Right lobe of liver (tissue), 6 donors: ENCODE measurements at regions of chr17 and their contacts with region 1.

Region 1: DNA sequence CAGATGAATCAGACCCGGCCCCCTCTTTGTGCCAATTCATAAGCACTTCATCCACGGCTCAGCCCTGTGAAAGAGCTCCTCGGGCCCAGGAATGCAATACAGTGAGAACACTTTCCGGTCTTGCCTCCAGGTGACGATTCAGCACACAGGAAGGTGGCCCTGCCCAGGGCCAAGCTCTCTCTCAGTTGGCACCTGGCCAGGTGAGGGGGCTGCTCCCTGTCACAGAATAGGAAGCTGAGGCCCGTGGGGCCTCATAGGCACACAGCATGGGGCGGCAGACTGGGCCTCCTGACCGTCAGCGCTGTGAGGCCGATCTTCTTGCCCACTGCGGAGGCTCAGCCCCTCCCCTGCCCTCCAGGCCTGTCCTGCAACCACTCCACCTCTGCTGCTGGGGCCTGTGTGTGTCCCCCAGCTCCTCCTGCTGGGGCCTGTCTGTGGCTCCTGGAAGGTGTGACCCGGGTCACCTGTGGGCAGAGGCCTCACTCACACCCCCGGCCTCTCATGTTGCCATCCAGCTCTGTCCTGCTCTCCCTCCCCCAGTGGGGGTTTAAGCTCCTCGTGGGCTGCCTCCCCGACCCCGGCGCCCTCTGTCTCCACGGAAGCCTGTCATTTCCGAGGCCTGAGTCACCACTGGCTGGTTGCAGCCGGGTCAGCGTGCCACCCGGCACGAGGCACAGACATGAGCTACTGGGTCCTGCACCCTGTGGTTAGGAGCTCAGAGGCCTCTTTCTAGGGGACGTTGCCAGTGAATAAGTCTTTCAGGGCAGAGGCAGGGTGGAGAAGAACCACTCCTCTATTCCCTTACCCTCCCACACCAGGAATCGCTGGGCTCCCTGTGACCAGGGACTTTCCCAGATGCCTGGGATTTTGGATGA is 114.4 kb downstream of the SEC14L1 start:
- DNase-seq: no peak
- ATAC-seq: peak in 3 of 4 donors; percentile 12 to 36 (median 21)
- H3K4me3 ChIP-seq: no peak overlapping the region
- H3K27ac ChIP-seq: no peak overlapping the region
- H3K4me1 ChIP-seq: no peaks in the 10 kb centered on the region
- H3K27me3 ChIP-seq: no peaks in the 10 kb centered on the region
- CTCF ChIP-seq: no peak
- POLR2A ChIP-seq: no peak

Region 2: DNA sequence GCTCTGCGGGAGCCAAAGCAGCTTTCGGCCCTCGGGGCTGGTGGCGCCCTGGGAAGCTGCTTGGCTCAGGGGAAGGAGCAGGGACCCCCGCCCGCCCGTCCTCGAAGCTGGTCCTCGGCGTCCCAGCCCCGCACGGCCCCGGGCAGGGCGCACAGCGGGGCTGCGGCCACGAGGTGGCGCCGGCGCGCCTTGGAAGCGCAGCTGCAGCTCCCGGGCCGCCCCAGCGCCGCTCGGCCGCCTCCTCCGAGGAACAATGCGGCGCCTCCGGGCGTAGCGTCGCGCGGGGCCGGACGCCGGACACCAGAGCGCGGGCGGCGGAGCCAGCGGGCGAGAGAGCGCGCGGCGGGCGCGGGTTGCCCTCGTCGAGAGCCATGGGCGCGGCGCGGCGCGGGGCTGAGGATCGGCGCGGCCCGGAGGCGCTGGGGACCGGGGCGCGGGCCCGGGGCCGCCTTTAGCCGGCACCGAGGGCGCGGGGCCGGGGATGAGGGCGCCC is 387.0 kb before region 1 on chr17 and contains the start of gene MGAT5B:
- intact Hi-C with region 1: loop called in 1 of 2 experiments (anchors 10 kb)
- DNase-seq: peak; percentile 69 to 85 (median 80)
- ATAC-seq: peak; percentile 91 to 98 (median 94)
- H3K4me3 ChIP-seq: peak within 1 kb of the TSS in 1 of 3 donors; percentile 29
- H3K27ac ChIP-seq: no peak within 1 kb of the TSS
- H3K4me1 ChIP-seq: no peaks in the 10 kb centered on the region
- H3K27me3 ChIP-seq: peaks cover 0 to 17% of the 10 kb centered on the region in 2 donors
- CTCF ChIP-seq: peak; percentile 76 to 98 (median 82)
- POLR2A ChIP-seq: no peak
- total RNA-seq, gene MGAT5B: 0.16 TPM in 1 of 6 experiments, not detected in the others

Region 3: GRCh38 chr17:77061669-77062068 is 193.5 kb before region 1 on chr17:
- intact Hi-C with region 1: no loop called
- DNase-seq: no peak
- ATAC-seq: peak in 1 of 4 donors; percentile 18
- H3K4me3 ChIP-seq: no peak overlapping the region
- H3K27ac ChIP-seq: no peak overlapping the region
- H3K4me1 ChIP-seq: no peaks in the 10 kb centered on the region
- H3K27me3 ChIP-seq: no peaks in the 10 kb centered on the region
- CTCF ChIP-seq: no peak
- POLR2A ChIP-seq: no peak

Region 4: GRCh38 chr17:77076124-77076872 is 178.9 kb before region 1 on chr17:
- intact Hi-C with region 1: loop called in 1 of 2 experiments (anchors 5 kb)
- DNase-seq: no peak
- ATAC-seq: no peak
- H3K4me3 ChIP-seq: no peak overlapping the region
- H3K27ac ChIP-seq: no peak overlapping the region
- H3K4me1 ChIP-seq: no peaks in the 10 kb centered on the region
- H3K27me3 ChIP-seq: no peaks in the 10 kb centered on the region
- CTCF ChIP-seq: no peak
- POLR2A ChIP-seq: no peak

Region 5: GRCh38 chr17:77186141-77186604 is 69.0 kb before region 1 on chr17:
- intact Hi-C with region 1: no loop called
- DNase-seq: no peak
- ATAC-seq: peak in 2 of 4 donors; percentile 12 to 40
- H3K4me3 ChIP-seq: no peak overlapping the region
- H3K27ac ChIP-seq: no peak overlapping the region
- H3K4me1 ChIP-seq: no peaks in the 10 kb centered on the region
- H3K27me3 ChIP-seq: no peaks in the 10 kb centered on the region
- CTCF ChIP-seq: no peak
- POLR2A ChIP-seq: no peak

Region 6: GRCh38 chr17:77297693-77298666 is 42.8 kb after region 1 on chr17:
- intact Hi-C with region 1: no loop called
- DNase-seq: no peak
- ATAC-seq: no peak
- H3K4me3 ChIP-seq: no peak overlapping the region
- H3K27ac ChIP-seq: no peak overlapping the region
- H3K4me1 ChIP-seq: peaks cover 0 to 20% (median 0%) of the 10 kb centered on the region in 4 donors
- H3K27me3 ChIP-seq: no peaks in the 10 kb centered on the region
- CTCF ChIP-seq: no peak
- POLR2A ChIP-seq: no peak

Region 7: GRCh38 chr17:77308861-77309726 is 53.9 kb after region 1 on chr17:
- intact Hi-C with region 1: no loop called
- DNase-seq: peak in 1 of 3 donors; percentile 33
- ATAC-seq: no peak
- H3K4me3 ChIP-seq: no peak overlapping the region
- H3K27ac ChIP-seq: no peak overlapping the region
- H3K4me1 ChIP-seq: peaks cover 0 to 66% (median 38%) of the 10 kb centered on the region in 4 donors
- H3K27me3 ChIP-seq: no peaks in the 10 kb centered on the region
- CTCF ChIP-seq: no peak
- POLR2A ChIP-seq: no peak